Endothelial cell of umbilical vein (primary cell): ENCODE measurements at regions of chr10 and their contacts with region 1.

Region 1: GRCh38 chr10:125679436-125679835 is 3.5 kb downstream of the TEX36 start:
- DNase-seq: peak; percentile 35
- H3K4me3 ChIP-seq: no peak overlapping the region
- H3K27ac ChIP-seq: peak overlapping the region; percentile 53
- H3K4me1 ChIP-seq: peaks cover 15% of the 10 kb centered on the region
- H3K27me3 ChIP-seq: no peaks in the 10 kb centered on the region
- CTCF ChIP-seq: no peak
- POLR2A ChIP-seq: no peak

Region 2: GRCh38 chr10:125605167-125605566 is 74.3 kb before region 1 on chr10:
- CTCF ChIA-PET with region 1: no interaction called
- POLR2A ChIA-PET with region 1: no interaction called
- dilution Hi-C with region 1: no loop called
- intact Hi-C with region 1: loop called (anchors 5 kb)
- DNase-seq: peak; percentile 21
- H3K4me3 ChIP-seq: no peak overlapping the region
- H3K27ac ChIP-seq: no peak overlapping the region
- H3K4me1 ChIP-seq: peaks cover 28% of the 10 kb centered on the region
- H3K27me3 ChIP-seq: peaks cover 0 to 2% of the 10 kb centered on the region in 2 experiments
- CTCF ChIP-seq: no peak
- POLR2A ChIP-seq: no peak